SK-N-SH (cell line): ENCODE measurements at regions of chr5 and their contacts with region 1.

Region 1: DNA sequence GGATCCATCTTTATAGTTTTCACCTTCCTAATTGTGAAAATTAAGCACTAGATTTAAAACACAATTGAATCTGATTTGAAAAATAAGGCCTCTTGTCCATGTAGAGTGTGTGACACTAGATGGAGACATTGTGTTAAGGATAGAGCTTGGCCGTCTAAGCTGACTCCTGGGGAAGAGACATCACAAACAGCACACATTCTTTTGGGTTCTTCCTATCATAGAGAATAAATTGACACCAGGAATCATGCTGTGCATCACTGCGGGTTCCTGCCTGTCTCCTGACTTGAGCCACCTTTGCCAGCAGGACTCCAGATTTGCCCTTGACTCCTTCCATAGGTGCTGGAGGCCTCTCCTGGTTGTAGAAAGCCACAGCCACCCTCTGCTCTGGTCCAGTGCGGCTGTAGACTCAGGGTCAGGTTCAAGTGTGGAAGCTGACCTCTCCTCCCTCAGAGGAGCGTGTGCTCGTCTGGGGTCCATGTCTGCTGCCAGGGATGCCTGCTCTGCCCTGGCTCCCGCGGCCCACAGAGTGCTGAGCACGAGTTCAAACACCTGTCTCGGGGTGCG is 11.2 kb downstream of the ROPN1L start:
- DNase-seq: peak; percentile 78
- H3K4me3 ChIP-seq: peak overlapping the region in 1 of 2 experiments; percentile 16; a peak in 1 of 4 replicates
- H3K27ac ChIP-seq: peak overlapping the region in 1 of 2 experiments; percentile 34; a peak in 2 of 4 replicates
- H3K4me1 ChIP-seq: peaks cover 15% of the 10 kb centered on the region in 2 experiments; a peak in 3 of 4 replicates
- H3K27me3 ChIP-seq: no peaks in the 10 kb centered on the region
- CTCF ChIP-seq: peak; percentile 93
- EP300 ChIP-seq: no peak
- RAD21 ChIP-seq: peak; percentile 99

Region 2: DNA sequence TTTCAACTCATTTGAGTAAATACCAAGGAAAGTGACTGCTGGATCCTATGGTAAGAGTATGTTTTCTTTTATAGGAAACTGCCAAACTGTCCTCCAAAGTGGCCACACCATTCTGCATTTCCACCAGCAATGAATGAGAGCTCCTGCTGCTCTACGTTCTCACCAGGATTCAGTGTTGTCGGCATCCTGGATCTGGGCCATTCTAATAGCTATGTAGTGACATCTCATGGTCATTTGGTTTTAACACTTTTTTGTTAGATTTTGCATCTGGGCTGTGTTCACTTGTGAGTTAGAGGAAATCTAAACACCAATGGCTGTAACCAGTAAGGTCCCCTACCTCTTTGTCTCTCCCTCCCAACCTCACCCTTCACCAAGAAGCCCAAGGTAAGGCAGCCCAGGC is 319.0 kb before region 1 on chr5:
- CTCF ChIA-PET with region 1: no interaction called
- POLR2A ChIA-PET with region 1: no interaction called
- DNase-seq: no peak
- H3K4me3 ChIP-seq: no peak overlapping the region
- H3K27ac ChIP-seq: no peak overlapping the region
- H3K4me1 ChIP-seq: no peaks in the 10 kb centered on the region
- H3K27me3 ChIP-seq: no peaks in the 10 kb centered on the region
- CTCF ChIP-seq: no peak
- EP300 ChIP-seq: no peak
- RAD21 ChIP-seq: peak; percentile 52

Region 3: GRCh38 chr5:10283927-10284635 is 168.8 kb before region 1 on chr5:
- CTCF ChIA-PET with region 1: interaction called, 18 read pairs
- POLR2A ChIA-PET with region 1: no interaction called
- DNase-seq: peak; percentile 85
- H3K4me3 ChIP-seq: peak overlapping the region in 1 of 2 experiments; percentile 31; a peak in 1 of 4 replicates
- H3K27ac ChIP-seq: no peak overlapping the region
- H3K4me1 ChIP-seq: peaks cover 0 to 6% of the 10 kb centered on the region in 2 experiments; a peak in 1 of 4 replicates
- H3K27me3 ChIP-seq: no peaks in the 10 kb centered on the region
- CTCF ChIP-seq: peak; percentile 89
- EP300 ChIP-seq: no peak
- RAD21 ChIP-seq: peak; percentile 84

Region 4: GRCh38 chr5:10466446-10467073 is 13.7 kb after region 1 on chr5:
- CTCF ChIA-PET with region 1: interaction called, 11 read pairs
- POLR2A ChIA-PET with region 1: no interaction called
- DNase-seq: no peak
- H3K4me3 ChIP-seq: no peak overlapping the region
- H3K27ac ChIP-seq: no peak overlapping the region
- H3K4me1 ChIP-seq: peaks cover 0 to 11% of the 10 kb centered on the region in 2 experiments; a peak in 2 of 4 replicates
- H3K27me3 ChIP-seq: no peaks in the 10 kb centered on the region
- CTCF ChIP-seq: no peak
- EP300 ChIP-seq: no peak
- RAD21 ChIP-seq: no peak

Region 5: GRCh38 chr5:10608827-10609226 is 156.0 kb after region 1 on chr5:
- CTCF ChIA-PET with region 1: interaction called, 10 read pairs
- POLR2A ChIA-PET with region 1: no interaction called
- DNase-seq: no peak
- H3K4me3 ChIP-seq: no peak overlapping the region
- H3K27ac ChIP-seq: no peak overlapping the region
- H3K4me1 ChIP-seq: peaks cover 0 to 3% of the 10 kb centered on the region in 2 experiments; a peak in 1 of 4 replicates
- H3K27me3 ChIP-seq: no peaks in the 10 kb centered on the region
- CTCF ChIP-seq: no peak
- EP300 ChIP-seq: no peak
- RAD21 ChIP-seq: no peak

Region 6: DNA sequence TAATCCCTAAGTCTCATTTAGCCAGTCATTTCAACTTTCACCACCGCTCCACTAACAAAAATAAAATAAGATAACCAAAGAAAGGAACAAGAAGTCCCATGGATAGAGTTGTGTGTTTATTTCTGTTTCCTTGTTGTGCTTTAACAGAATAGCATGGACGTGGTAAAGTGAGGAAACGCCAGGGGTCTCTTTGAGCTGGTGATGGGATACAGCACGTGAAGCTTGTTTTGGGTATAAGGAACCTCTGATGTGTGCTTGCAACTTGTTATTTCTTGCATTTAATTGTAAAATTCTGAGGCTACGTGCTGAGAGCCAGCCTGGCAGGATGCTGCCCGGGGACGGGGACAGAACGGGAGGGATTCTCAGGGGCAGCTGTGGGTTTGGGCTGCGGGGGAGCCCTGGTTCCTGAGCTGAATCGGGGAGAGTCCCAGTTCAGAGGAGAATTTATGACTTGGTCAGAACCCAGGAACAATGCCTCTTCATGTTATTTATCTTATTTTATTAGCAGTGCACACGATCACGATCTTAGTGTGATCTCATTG is 174.4 kb after region 1 on chr5:
- CTCF ChIA-PET with region 1: interaction called, 265 read pairs
- POLR2A ChIA-PET with region 1: no interaction called
- DNase-seq: peak; percentile 64
- H3K4me3 ChIP-seq: peak overlapping the region; percentile 39 to 43
- H3K27ac ChIP-seq: peak overlapping the region; percentile 28 to 63; a peak in 2 of 4 replicates
- H3K4me1 ChIP-seq: peaks cover 0 to 7% of the 10 kb centered on the region in 2 experiments; a peak in 2 of 4 replicates
- H3K27me3 ChIP-seq: no peaks in the 10 kb centered on the region
- CTCF ChIP-seq: no peak
- EP300 ChIP-seq: no peak
- RAD21 ChIP-seq: no peak

Region 7: GRCh38 chr5:10689391-10690081 is 236.7 kb after region 1 on chr5:
- CTCF ChIA-PET with region 1: interaction called, 11 read pairs
- POLR2A ChIA-PET with region 1: no interaction called
- DNase-seq: peak; percentile 60
- H3K4me3 ChIP-seq: no peak overlapping the region
- H3K27ac ChIP-seq: peak overlapping the region; percentile 28 to 92; a peak in 3 of 4 replicates
- H3K4me1 ChIP-seq: peaks cover 18 to 29% of the 10 kb centered on the region in 2 experiments
- H3K27me3 ChIP-seq: no peaks in the 10 kb centered on the region
- CTCF ChIP-seq: peak; percentile 44; the same call in 1 of the 2 replicates
- EP300 ChIP-seq: no peak
- RAD21 ChIP-seq: peak; percentile 51

Region 8: DNA sequence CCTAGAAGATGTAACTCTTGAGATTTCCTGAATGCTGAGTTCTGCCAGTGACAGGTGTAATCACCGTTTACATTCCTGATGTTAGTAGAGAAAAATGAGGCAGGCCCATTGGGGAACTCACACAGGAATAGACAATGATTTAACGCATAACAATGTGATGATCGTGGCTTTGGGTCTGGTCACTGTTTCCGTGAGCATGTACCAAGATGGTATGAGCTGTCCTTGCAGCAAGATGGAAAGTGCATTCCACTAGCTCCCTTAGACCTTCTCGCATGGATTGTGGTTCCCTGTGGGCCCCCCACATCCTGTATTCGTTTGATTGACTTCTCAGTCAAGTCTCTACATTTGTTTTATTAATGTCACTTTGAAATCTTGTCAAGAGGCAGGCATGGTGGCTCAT is 432.2 kb after region 1 on chr5:
- CTCF ChIA-PET with region 1: no interaction called
- POLR2A ChIA-PET with region 1: no interaction called
- DNase-seq: no peak
- H3K4me3 ChIP-seq: no peak overlapping the region
- H3K27ac ChIP-seq: 0 out of 4 replicates have a peak overlapping the region, but pooled peaks of 1 of the 2 experiments have one; percentile 21
- H3K4me1 ChIP-seq: no peaks in the 10 kb centered on the region
- H3K27me3 ChIP-seq: no peaks in the 10 kb centered on the region
- CTCF ChIP-seq: no peak
- EP300 ChIP-seq: peak in 1 of 2 experiments; percentile 78; a peak in 2 of 4 replicates
- RAD21 ChIP-seq: no peak